Naive thymus-derived CD4-positive, alpha-beta T cell (primary cell): ENCODE measurements at regions of chr6 and their contacts with region 1.

Region 1: DNA sequence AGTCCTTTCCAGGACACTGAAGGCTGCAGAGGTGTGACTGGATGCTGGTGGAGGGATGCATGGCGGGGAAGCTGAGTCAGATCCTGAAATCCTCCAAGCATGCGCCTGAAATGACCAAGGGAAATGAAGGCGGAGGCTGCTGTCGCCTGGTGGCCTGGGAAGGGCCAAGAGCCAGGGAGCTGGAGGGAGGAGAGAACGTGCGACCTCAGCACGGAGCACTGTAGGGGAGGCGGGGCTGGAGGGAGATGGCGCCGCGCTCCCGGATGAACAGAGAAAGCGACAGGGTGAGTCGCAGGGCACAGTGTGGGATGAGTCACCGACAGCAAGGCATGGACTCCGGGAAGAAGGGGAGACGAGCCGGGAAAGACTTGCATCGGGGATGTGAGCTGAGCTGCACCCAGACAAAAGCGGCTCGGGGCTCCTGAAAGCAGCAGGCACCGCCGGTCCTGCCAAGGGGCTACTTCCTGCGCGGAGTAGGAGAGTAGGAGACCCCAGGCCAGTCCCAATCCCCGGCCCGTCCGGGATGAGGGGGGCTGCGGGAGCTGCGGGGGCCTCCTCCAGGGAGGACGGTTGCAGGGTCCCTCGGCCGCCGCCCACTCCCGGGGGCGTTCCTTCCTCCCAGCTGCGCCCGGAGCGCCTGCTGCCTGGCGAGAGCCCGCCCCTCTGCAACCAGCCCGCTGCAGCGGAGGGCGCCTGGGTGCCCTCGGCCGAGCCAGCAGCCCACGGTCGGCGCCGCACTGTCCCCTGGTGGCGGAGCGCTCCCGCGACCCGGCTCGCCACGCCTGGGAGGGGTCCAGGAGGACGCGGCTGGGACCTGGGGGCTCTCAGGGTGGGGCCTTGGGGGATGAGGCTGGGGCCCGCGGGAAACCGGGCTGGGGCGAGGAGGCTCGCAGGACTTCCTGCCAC is 11.0 kb upstream of the NQO2 start:
- DNase-seq: peak in 8 of 9 donors; percentile 68 to 84 (median 78)
- ATAC-seq: peak; percentile 87
- H3K4me3 ChIP-seq: peak overlapping the region; percentile 76
- H3K4me3 Mint-ChIP-seq: peak overlapping the region; percentile 88 to 98 (median 96)
- H3K27ac ChIP-seq: peak overlapping the region; percentile 94
- H3K27ac Mint-ChIP-seq: peak overlapping the region; percentile 94 to 100 (median 100)
- H3K4me1 ChIP-seq: peaks cover 14% of the 10 kb centered on the region in 2 donors
- H3K4me1 Mint-ChIP-seq: peaks cover 15 to 41% (median 30%) of the 10 kb centered on the region in 7 donors
- H3K27me3 ChIP-seq: no peaks in the 10 kb centered on the region
- H3K27me3 Mint-ChIP-seq: peaks cover 0 to 11% (median 0%) of the 10 kb centered on the region in 5 donors

Region 2: GRCh38 chr6:1766654-1767053 is 1222.0 kb before region 1 on chr6:
- CTCF ChIA-PET with region 1: no interaction called
- POLR2A ChIA-PET with region 1: no interaction called
- intact Hi-C with region 1: no loop called
- DNase-seq: no peak
- ATAC-seq: no peak
- H3K4me3 ChIP-seq: no peak overlapping the region
- H3K4me3 Mint-ChIP-seq: no peak overlapping the region
- H3K27ac ChIP-seq: no peak overlapping the region
- H3K27ac Mint-ChIP-seq: no peak overlapping the region
- H3K4me1 ChIP-seq: peaks cover 7 to 17% of the 10 kb centered on the region in 2 donors
- H3K4me1 Mint-ChIP-seq: peaks cover 5 to 22% (median 17%) of the 10 kb centered on the region in 7 donors
- H3K27me3 ChIP-seq: no peaks in the 10 kb centered on the region
- H3K27me3 Mint-ChIP-seq: peaks cover 0 to 3% (median 0%) of the 10 kb centered on the region in 5 donors

Region 3: DNA sequence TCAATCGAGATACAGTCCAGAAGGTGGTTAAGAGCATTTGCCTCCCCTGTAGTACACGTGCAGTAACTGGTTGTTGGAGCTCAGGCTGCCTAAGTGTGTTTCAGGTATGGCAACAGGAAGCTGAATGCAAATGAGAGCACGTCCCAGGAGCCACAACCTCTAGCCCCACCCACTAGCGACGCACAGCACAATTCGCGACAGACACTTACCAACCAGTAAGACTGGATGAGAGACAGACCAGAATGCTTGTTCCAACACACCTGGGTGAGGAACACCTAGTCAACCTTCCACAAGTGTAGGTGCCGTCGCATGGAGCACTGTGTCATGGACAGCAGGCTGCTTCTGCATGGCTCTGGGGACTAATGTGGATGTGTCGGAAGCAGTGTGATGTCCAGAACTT is 139.8 kb before region 1 on chr6:
- CTCF ChIA-PET with region 1: interaction called, 53 read pairs
- POLR2A ChIA-PET with region 1: interaction called, 156 read pairs
- intact Hi-C with region 1: loop called (anchors 1 kb)
- DNase-seq: peak in 7 of 9 donors; percentile 62 to 84 (median 75)
- ATAC-seq: peak; percentile 82
- H3K4me3 ChIP-seq: no peak overlapping the region
- H3K4me3 Mint-ChIP-seq: peak overlapping the region; percentile 30 to 83 (median 66)
- H3K27ac ChIP-seq: peak overlapping the region; percentile 63
- H3K27ac Mint-ChIP-seq: peak overlapping the region; percentile 85 to 95 (median 91)
- H3K4me1 ChIP-seq: peaks cover 16 to 30% of the 10 kb centered on the region in 2 donors
- H3K4me1 Mint-ChIP-seq: peaks cover 25 to 49% (median 48%) of the 10 kb centered on the region in 7 donors
- H3K27me3 ChIP-seq: no peaks in the 10 kb centered on the region
- H3K27me3 Mint-ChIP-seq: no peaks in the 10 kb centered on the region

Region 4: DNA sequence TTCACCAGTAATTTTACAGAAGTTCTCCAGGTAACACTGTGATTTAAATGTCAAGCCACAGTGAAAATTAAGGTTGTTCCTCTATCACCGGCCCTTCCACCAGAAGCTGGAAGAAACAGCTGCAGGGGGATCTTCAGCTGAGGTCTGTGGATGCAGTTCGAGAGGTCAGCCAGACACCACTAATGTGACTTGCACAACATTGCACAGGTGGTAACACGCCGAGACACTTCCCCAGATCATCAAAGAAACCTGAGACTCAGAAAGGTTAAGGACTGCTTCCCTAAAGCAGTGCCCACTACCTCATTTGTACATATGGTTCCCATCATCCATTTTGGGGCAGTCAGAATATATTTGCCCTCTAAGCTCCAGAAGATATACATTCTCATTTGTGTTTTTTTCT is 77.5 kb before region 1 on chr6:
- CTCF ChIA-PET with region 1: interaction called, 9 read pairs
- POLR2A ChIA-PET with region 1: interaction called, 14 read pairs
- intact Hi-C with region 1: loop called in 1 of 2 experiments (anchors 1 kb)
- DNase-seq: no peak
- ATAC-seq: peak; percentile 35
- H3K4me3 ChIP-seq: no peak overlapping the region
- H3K4me3 Mint-ChIP-seq: no peak overlapping the region
- H3K27ac ChIP-seq: no peak overlapping the region
- H3K27ac Mint-ChIP-seq: peak overlapping the region in 2 of 9 donors; percentile 40 to 54
- H3K4me1 ChIP-seq: peaks cover 0 to 7% of the 10 kb centered on the region in 2 donors
- H3K4me1 Mint-ChIP-seq: peaks cover 26 to 53% (median 40%) of the 10 kb centered on the region in 7 donors
- H3K27me3 ChIP-seq: no peaks in the 10 kb centered on the region
- H3K27me3 Mint-ChIP-seq: peaks cover 0 to 1% (median 0%) of the 10 kb centered on the region in 5 donors

Region 5: GRCh38 chr6:2976571-2977085 is 12.1 kb before region 1 on chr6:
- CTCF ChIA-PET with region 1: interaction called, 6 read pairs
- POLR2A ChIA-PET with region 1: interaction called, 33 read pairs
- intact Hi-C with region 1: loop called (anchors 1 kb)
- DNase-seq: no peak
- ATAC-seq: no peak
- H3K4me3 ChIP-seq: no peak overlapping the region
- H3K4me3 Mint-ChIP-seq: peak overlapping the region in 1 of 10 donors; percentile 59
- H3K27ac ChIP-seq: no peak overlapping the region
- H3K27ac Mint-ChIP-seq: no peak overlapping the region
- H3K4me1 ChIP-seq: peaks cover 7 to 16% of the 10 kb centered on the region in 2 donors
- H3K4me1 Mint-ChIP-seq: peaks cover 6 to 20% (median 17%) of the 10 kb centered on the region in 7 donors
- H3K27me3 ChIP-seq: no peaks in the 10 kb centered on the region
- H3K27me3 Mint-ChIP-seq: peaks cover 0 to 77% (median 4%) of the 10 kb centered on the region in 5 donors

Region 6: GRCh38 chr6:3068329-3069214 is 79.9 kb after region 1 on chr6 and contains the start of gene RIPK1:
- CTCF ChIA-PET with region 1: interaction called, 5 read pairs
- POLR2A ChIA-PET with region 1: interaction called, 67 read pairs
- intact Hi-C with region 1: no loop called
- DNase-seq: peak; percentile 92 to 98 (median 95)
- ATAC-seq: peak; percentile 88
- H3K4me3 ChIP-seq: peak within 1 kb of the TSS; percentile 86
- H3K4me3 Mint-ChIP-seq: peak within 1 kb of the TSS; percentile 91 to 99 (median 96)
- H3K27ac ChIP-seq: peak within 1 kb of the TSS; percentile 99
- H3K27ac Mint-ChIP-seq: peak within 1 kb of the TSS; percentile 92 to 99 (median 98)
- H3K4me1 ChIP-seq: peaks cover 23% of the 10 kb centered on the region in 2 donors
- H3K4me1 Mint-ChIP-seq: peaks cover 41 to 83% (median 69%) of the 10 kb centered on the region in 7 donors
- H3K27me3 ChIP-seq: no peaks in the 10 kb centered on the region
- H3K27me3 Mint-ChIP-seq: no peaks in the 10 kb centered on the region
- total RNA-seq, gene RIPK1: 20.3 to 34.8 (median 32.4) TPM

Region 7: DNA sequence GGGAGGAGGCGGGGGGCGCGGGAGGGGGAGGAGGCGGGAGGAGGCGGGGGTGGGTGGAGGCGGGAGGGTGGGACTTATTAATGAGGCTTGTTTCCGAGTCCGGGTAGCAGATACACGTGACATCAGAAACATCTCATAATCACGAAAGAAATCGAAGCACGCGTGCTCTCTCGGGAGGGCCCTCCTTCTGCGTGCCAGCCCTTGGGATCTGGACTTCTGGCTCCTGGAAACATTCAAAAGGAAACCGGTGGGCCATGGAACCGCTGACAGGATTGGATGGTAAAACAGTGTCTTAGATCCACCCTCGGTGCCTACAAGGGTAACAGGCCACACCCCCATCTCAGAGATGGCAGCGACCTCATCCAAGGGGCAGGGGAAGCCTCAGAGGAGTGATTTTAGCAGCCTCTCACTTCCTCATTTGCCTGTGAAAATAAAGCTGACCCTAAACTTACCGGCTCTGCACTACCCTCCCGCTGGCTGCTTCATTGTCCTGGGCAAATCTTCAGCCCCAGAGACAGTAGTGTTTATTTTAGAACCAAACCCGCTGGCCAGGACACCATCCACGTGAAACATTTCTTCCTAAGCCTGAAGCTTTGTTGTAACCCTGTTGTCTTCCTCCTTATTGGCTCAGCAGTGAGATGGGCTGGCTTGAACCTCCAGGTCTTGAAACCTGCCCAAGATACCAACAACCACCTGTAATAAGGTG is 367.5 kb after region 1 on chr6:
- CTCF ChIA-PET with region 1: no interaction called
- POLR2A ChIA-PET with region 1: no interaction called
- intact Hi-C with region 1: loop called in 1 of 2 experiments (anchors 5 kb)
- DNase-seq: peak in 8 of 9 donors; percentile 31 to 86 (median 78)
- ATAC-seq: peak; percentile 89
- H3K4me3 ChIP-seq: peak overlapping the region; percentile 65
- H3K4me3 Mint-ChIP-seq: peak overlapping the region; percentile 76 to 99 (median 88)
- H3K27ac ChIP-seq: peak overlapping the region; percentile 78
- H3K27ac Mint-ChIP-seq: peak overlapping the region in 8 of 9 donors; percentile 92 to 100 (median 98)
- H3K4me1 ChIP-seq: peaks cover 7 to 27% of the 10 kb centered on the region in 2 donors
- H3K4me1 Mint-ChIP-seq: peaks cover 14 to 79% (median 58%) of the 10 kb centered on the region in 7 donors
- H3K27me3 ChIP-seq: no peaks in the 10 kb centered on the region
- H3K27me3 Mint-ChIP-seq: peaks cover 0 to 43% (median 0%) of the 10 kb centered on the region in 5 donors